Astrocyte of the cerebellum (primary cell): ENCODE measurements at regions of chr2 and their contacts with region 1.

Region 1: DNA sequence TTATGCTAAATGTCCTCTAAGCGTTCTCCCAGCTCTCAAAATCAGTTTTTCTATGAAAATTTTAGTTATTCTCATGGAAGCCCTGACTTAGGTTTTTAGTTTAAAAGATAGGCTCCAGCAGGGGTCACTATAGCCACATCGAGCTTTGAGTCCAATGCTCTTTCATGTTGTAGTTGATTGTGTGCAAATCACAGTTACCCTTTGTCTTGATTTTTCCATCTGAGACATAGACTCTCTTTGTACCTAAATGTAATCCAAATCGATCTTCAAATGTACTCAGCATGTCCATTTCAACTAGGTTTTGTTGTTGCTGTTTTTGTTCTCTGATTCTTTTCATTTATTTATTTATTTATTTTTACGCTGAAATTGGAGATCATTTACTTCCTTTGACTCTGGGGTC is 26.4 kb upstream of the MSTN start:
- DNase-seq: peak; percentile 65
- H3K4me3 ChIP-seq: no peak overlapping the region
- CTCF ChIP-seq: peak; percentile 70

Region 2: DNA sequence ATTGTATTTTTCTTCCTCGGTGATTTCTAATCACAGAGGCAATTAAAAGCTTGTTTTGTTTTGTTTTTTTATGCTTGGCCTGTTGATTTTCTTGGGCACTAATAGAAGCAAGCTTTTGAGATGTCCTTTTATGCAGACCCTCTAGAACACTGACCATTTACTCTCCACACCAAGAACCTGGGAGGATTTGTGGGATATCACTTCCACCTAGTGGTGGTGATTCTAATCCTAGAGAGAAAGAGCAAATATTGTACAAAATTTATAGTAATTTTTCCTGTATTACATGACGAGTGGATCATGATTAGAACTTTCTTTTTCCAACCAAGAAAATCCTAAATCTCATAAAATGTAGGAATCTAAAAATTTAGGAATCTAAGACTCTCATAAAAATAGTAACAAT is 422.2 kb after region 1 on chr2:
- in situ Hi-C with region 1: loop called (anchors 25 kb)
- DNase-seq: peak; percentile 39
- H3K4me3 ChIP-seq: no peak overlapping the region
- CTCF ChIP-seq: peak; percentile 51